ENCODE measurements at regions of chr1 and their contacts with region 1.

Region 1: GRCh38 chr1:82565146-82565545 is 764.4 kb downstream of the ADGRL2 start:
- DNase-seq: peak; percentile 80
- H3K4me3 Mint-ChIP-seq: peak overlapping the region; percentile 49
- H3K27ac Mint-ChIP-seq: peak overlapping the region; percentile 79
- H3K4me1 Mint-ChIP-seq: peaks cover 26% of the 10 kb centered on the region
- H3K27me3 Mint-ChIP-seq: no peaks in the 10 kb centered on the region
- CTCF ChIP-seq: no peak

Region 2: DNA sequence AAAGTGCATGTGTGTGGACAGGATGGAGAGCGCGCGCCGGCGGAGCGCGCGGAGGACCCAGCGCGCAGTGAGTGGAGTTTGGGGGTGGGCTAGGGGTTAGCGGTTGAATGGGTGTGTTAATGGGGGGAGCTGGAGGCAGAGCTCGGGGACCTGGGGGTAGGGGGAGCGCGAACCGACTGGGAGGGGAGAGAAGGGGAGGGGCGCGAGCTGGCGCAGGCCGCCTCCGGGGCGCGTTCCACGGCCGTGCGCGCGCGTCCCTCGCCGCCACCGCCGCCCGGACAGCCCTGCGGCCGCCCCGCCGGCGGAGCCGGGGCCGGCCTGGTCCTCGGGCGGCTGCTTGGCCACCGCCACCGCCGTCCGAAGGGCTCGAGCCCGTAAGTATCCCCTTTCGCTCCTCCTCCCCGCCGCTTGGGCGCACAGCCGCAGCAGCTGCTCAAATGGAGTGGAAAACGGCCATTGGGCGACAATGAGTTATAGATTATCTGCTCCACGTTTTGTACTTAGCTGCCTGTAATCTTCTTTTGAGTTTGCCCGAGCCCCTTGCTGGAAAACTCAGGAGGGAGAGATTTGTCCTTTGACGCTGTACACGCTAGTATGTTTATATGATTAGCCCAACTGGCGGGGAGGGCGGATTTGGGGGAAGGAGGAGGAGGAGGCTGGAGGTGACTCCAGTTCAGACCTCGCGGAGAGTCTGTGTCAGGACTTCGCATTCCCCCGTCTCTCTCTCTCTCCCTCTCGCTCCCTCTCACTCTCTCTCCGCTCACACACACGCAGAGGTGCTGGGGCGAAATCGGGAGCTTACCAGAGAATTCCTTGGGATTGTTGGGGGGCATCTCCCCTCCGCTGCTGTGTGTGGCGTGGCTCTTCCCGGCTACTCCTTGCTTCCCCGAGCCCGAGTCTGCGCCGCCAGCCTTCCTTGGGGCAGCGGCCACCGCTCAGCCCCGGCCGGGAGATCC is 764.2 kb before region 1 on chr1 and contains the start of gene ADGRL2:
- CTCF ChIA-PET with region 1: no interaction called
- POLR2A ChIA-PET with region 1: interaction called, 6 read pairs
- intact Hi-C with region 1: loop called (anchors 5 kb)
- DNase-seq: peak; percentile 93
- H3K4me3 Mint-ChIP-seq: peak within 1 kb of the TSS; percentile 98
- H3K27ac Mint-ChIP-seq: peak within 1 kb of the TSS; percentile 69
- H3K4me1 Mint-ChIP-seq: peaks cover 7% of the 10 kb centered on the region
- H3K27me3 Mint-ChIP-seq: peaks cover 33% of the 10 kb centered on the region
- CTCF ChIP-seq: no peak
- total RNA-seq, gene ADGRL2: 3.0 and 3.4 TPM in 2 replicates